ENCODE measurements at regions of chr3 and their contacts with region 1.

Region 1: GRCh38 chr3:58640700-58641372 is 25.7 kb downstream of the FAM3D start:
- DNase-seq: peak; percentile 65
- H3K4me3 ChIP-seq: no peak overlapping the region
- H3K27ac ChIP-seq: no peak overlapping the region
- H3K4me1 ChIP-seq: peaks cover 7% of the 10 kb centered on the region
- H3K27me3 ChIP-seq: no peaks in the 10 kb centered on the region
- CTCF ChIP-seq: peak; percentile 83 to 92
- POLR2A ChIP-seq: no peak

Region 2: GRCh38 chr3:58568572-58569286 is 72.1 kb before region 1 on chr3:
- CTCF ChIA-PET with region 1: interaction called, 40 read pairs
- POLR2A ChIA-PET with region 1: no interaction called
- dilution Hi-C with region 1: no loop called
- intact Hi-C with region 1: no loop called
- DNase-seq: peak; percentile 83
- H3K4me3 ChIP-seq: no peak overlapping the region
- H3K27ac ChIP-seq: no peak overlapping the region
- H3K4me1 ChIP-seq: peaks cover 24% of the 10 kb centered on the region
- H3K27me3 ChIP-seq: no peaks in the 10 kb centered on the region
- CTCF ChIP-seq: peak; percentile 84 to 88
- POLR2A ChIP-seq: no peak

Region 3: GRCh38 chr3:58630076-58630709 is 10.6 kb before region 1 on chr3:
- CTCF ChIA-PET with region 1: interaction called, 76 read pairs
- POLR2A ChIA-PET with region 1: interaction called, 3 read pairs
- dilution Hi-C with region 1: no loop called
- intact Hi-C with region 1: no loop called
- DNase-seq: peak; percentile 62
- H3K4me3 ChIP-seq: no peak overlapping the region
- H3K27ac ChIP-seq: peak overlapping the region; percentile 74
- H3K4me1 ChIP-seq: peaks cover 32% of the 10 kb centered on the region
- H3K27me3 ChIP-seq: no peaks in the 10 kb centered on the region
- CTCF ChIP-seq: peak; percentile 88 to 89
- POLR2A ChIP-seq: no peak

Region 4: GRCh38 chr3:58722561-58722960 is 81.7 kb after region 1 on chr3:
- CTCF ChIA-PET with region 1: interaction called, 4 read pairs
- POLR2A ChIA-PET with region 1: no interaction called
- dilution Hi-C with region 1: no loop called
- intact Hi-C with region 1: loop called (anchors 5 kb)
- DNase-seq: no peak
- H3K4me3 ChIP-seq: no peak overlapping the region
- H3K27ac ChIP-seq: no peak overlapping the region
- H3K4me1 ChIP-seq: no peaks in the 10 kb centered on the region
- H3K27me3 ChIP-seq: no peaks in the 10 kb centered on the region
- CTCF ChIP-seq: no peak
- POLR2A ChIP-seq: no peak

Region 5: GRCh38 chr3:58994746-58995330 is 354.0 kb after region 1 on chr3:
- CTCF ChIA-PET with region 1: interaction called, 8 read pairs
- POLR2A ChIA-PET with region 1: no interaction called
- dilution Hi-C with region 1: no loop called
- intact Hi-C with region 1: loop called (anchors 1 kb)
- DNase-seq: peak; percentile 60
- H3K4me3 ChIP-seq: no peak overlapping the region
- H3K27ac ChIP-seq: no peak overlapping the region
- H3K4me1 ChIP-seq: peaks cover 19% of the 10 kb centered on the region
- H3K27me3 ChIP-seq: no peaks in the 10 kb centered on the region
- CTCF ChIP-seq: peak; percentile 59 to 71
- POLR2A ChIP-seq: no peak

Region 6: GRCh38 chr3:59212128-59212779 is 571.4 kb after region 1 on chr3:
- CTCF ChIA-PET with region 1: no interaction called
- POLR2A ChIA-PET with region 1: no interaction called
- dilution Hi-C with region 1: no loop called
- intact Hi-C with region 1: loop called (anchors 1 kb)
- DNase-seq: peak; percentile 44
- H3K4me3 ChIP-seq: no peak overlapping the region
- H3K27ac ChIP-seq: no peak overlapping the region
- H3K4me1 ChIP-seq: peaks cover 9% of the 10 kb centered on the region
- H3K27me3 ChIP-seq: peaks cover 3 to 8% of the 10 kb centered on the region in 2 experiments
- CTCF ChIP-seq: peak; percentile 36 to 41
- POLR2A ChIP-seq: no peak

Region 7: DNA sequence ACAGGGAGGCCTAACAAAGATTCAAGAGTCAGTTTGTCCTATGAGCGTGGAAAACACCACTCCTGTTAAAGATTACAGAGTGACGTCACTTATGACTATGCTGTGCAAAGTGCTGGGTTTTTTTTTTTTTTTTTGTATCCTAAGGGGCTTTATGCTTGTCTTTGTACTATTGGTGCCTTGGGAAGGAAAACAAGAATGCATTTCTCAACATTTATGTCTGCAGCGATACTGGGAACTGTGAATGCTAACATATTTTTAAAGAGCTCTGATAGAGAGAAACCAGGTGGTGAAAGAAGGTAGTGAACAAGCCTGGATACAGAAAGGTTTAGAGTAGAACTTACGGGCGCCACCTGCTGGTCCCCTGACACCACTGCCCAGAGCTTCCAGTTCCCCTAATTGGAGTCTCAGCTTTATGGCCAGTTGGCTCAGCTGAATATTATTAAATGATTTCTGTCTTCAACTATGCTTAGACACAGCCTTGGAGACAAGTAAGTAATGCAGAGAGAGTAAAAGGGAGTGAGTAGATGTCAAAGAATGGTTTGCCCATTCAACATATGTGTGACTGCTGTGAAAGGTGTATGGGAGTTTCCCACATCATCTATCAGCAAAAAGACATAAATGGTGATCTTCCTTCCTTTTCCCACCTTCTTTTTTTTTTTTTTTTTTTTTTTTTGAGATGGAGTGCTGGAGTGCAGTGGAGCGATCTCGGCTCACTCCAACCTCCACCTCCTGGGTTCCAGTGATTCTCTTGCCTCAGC is 1216.9 kb after region 1 on chr3:
- CTCF ChIA-PET with region 1: interaction called, 23 read pairs
- POLR2A ChIA-PET with region 1: no interaction called
- dilution Hi-C with region 1: no loop called
- intact Hi-C with region 1: no loop called
- DNase-seq: peak; percentile 58
- H3K4me3 ChIP-seq: no peak overlapping the region
- H3K27ac ChIP-seq: no peak overlapping the region
- H3K4me1 ChIP-seq: no peaks in the 10 kb centered on the region
- H3K27me3 ChIP-seq: no peaks in the 10 kb centered on the region
- CTCF ChIP-seq: peak; percentile 79 to 89
- POLR2A ChIP-seq: no peak

Measured in endothelial cell of umbilical vein (primary cell).